ENCODE measurements at regions of chr2 and their contacts with region 1.

Region 1: GRCh38 chr2:136452528-136452927 is 312.8 kb upstream of the THSD7B start:
- DNase-seq: no peak
- H3K4me3 ChIP-seq: no peak overlapping the region
- H3K27ac ChIP-seq: no peak overlapping the region
- H3K4me1 ChIP-seq: no peaks in the 10 kb centered on the region
- H3K27me3 ChIP-seq: no peaks in the 10 kb centered on the region
- CTCF ChIP-seq: no peak

Region 2: DNA sequence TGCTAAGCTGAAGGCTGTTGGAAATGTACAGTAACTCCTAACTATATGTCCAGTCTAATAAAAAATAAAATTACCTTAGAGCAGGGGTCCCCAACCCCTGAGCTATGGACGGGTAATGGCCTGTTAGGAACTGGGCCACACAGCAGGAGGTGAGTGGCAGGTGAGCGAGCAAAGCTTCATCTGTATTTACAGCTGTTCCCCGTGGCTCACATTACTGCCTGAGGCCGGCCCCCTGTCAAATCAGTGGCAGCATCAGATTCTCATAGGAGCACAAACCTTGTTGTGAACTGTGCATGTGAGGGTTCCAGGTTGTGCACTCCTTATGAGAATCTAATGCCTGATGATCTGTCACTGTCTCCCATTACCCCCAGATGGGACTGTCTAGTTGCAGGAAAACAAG is 261.5 kb before region 1 on chr2:
- intact Hi-C with region 1: no loop called
- DNase-seq: no peak
- H3K4me3 ChIP-seq: no peak overlapping the region
- H3K27ac ChIP-seq: no peak overlapping the region
- H3K4me1 ChIP-seq: no peaks in the 10 kb centered on the region
- H3K27me3 ChIP-seq: no peaks in the 10 kb centered on the region
- CTCF ChIP-seq: no peak

Region 3: GRCh38 chr2:136411946-136412345 is 40.6 kb before region 1 on chr2:
- intact Hi-C with region 1: loop called (anchors 2 kb)
- DNase-seq: no peak
- H3K4me3 ChIP-seq: no peak overlapping the region
- H3K27ac ChIP-seq: no peak overlapping the region
- H3K4me1 ChIP-seq: no peaks in the 10 kb centered on the region
- H3K27me3 ChIP-seq: peaks cover 0 to 4% of the 10 kb centered on the region in 2 donors
- CTCF ChIP-seq: no peak